ENCODE measurements at regions of chr20 and their contacts with region 1.

Region 1: GRCh38 chr20:2729251-2729713 is 36.7 kb downstream of the EBF4 start:
- DNase-seq: peak in 7 of 9 donors; percentile 50 to 72 (median 66)
- ATAC-seq: peak; percentile 95
- H3K4me3 ChIP-seq: peak overlapping the region; percentile 2
- H3K4me3 Mint-ChIP-seq: peak overlapping the region; percentile 55 to 87 (median 71)
- H3K27ac ChIP-seq: peak overlapping the region; percentile 62
- H3K27ac Mint-ChIP-seq: peak overlapping the region; percentile 71 to 96 (median 90)
- H3K4me1 ChIP-seq: peaks cover 20 to 33% of the 10 kb centered on the region in 2 donors
- H3K4me1 Mint-ChIP-seq: peaks cover 9 to 47% (median 36%) of the 10 kb centered on the region in 7 donors
- H3K27me3 ChIP-seq: no peaks in the 10 kb centered on the region
- H3K27me3 Mint-ChIP-seq: peaks cover 0 to 36% (median 0%) of the 10 kb centered on the region in 5 donors

Region 2: GRCh38 chr20:2663887-2664719 is 65.2 kb before region 1 on chr20 and contains the start of gene IDH3B:
- CTCF ChIA-PET with region 1: no interaction called
- POLR2A ChIA-PET with region 1: interaction called, 10 read pairs
- intact Hi-C with region 1: no loop called
- DNase-seq: peak; percentile 76 to 94 (median 90)
- ATAC-seq: peak; percentile 99
- H3K4me3 ChIP-seq: peak within 1 kb of the TSS; percentile 89
- H3K4me3 Mint-ChIP-seq: peak within 1 kb of the TSS; percentile 87 to 97 (median 94)
- H3K27ac ChIP-seq: peak within 1 kb of the TSS; percentile 87
- H3K27ac Mint-ChIP-seq: peak within 1 kb of the TSS; percentile 94 to 99 (median 97)
- H3K4me1 ChIP-seq: peaks cover 10 to 15% of the 10 kb centered on the region in 2 donors
- H3K4me1 Mint-ChIP-seq: peaks cover 4 to 34% (median 29%) of the 10 kb centered on the region in 7 donors
- H3K27me3 ChIP-seq: no peaks in the 10 kb centered on the region
- H3K27me3 Mint-ChIP-seq: peaks cover 0 to 10% (median 0%) of the 10 kb centered on the region in 5 donors
- total RNA-seq, gene IDH3B: 105 to 161 (median 107) TPM

Region 3: GRCh38 chr20:2693286-2694000 is 35.8 kb before region 1 on chr20:
- CTCF ChIA-PET with region 1: interaction called, 25 read pairs
- POLR2A ChIA-PET with region 1: interaction called, 3 read pairs
- intact Hi-C with region 1: loop called in 1 of 2 experiments (anchors 1 kb)
- DNase-seq: peak; percentile 15 to 70 (median 38)
- ATAC-seq: peak; percentile 73
- H3K4me3 ChIP-seq: no peak overlapping the region
- H3K4me3 Mint-ChIP-seq: peak overlapping the region in 4 of 10 donors; percentile 14 to 72 (median 42)
- H3K27ac ChIP-seq: no peak overlapping the region
- H3K27ac Mint-ChIP-seq: no peak overlapping the region
- H3K4me1 ChIP-seq: peaks cover 2% of the 10 kb centered on the region in 2 donors
- H3K4me1 Mint-ChIP-seq: peaks cover 16 to 26% (median 20%) of the 10 kb centered on the region in 7 donors
- H3K27me3 ChIP-seq: peaks cover 4 to 9% of the 10 kb centered on the region in 2 donors
- H3K27me3 Mint-ChIP-seq: peaks cover 16 to 55% (median 23%) of the 10 kb centered on the region in 5 donors

Region 4: DNA sequence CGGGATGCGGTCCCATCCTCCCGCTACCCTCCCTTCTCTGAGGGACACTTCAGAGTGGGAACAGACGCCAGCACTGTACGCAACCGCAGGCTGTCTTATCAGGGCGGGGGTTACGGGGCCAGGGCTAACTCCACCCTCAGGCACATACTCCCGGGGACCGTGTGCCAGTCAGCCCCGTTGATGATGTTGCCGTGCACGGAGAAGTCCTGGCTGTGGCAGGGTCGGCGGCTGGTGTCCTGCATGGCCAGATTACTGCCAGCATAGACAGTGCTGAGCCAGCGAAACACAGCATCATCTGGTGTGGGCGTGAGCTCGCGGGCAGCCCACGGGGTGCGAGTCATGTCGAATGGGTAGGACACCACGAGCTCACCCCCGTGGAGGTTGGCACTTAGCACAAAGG is 66.2 kb after region 1 on chr20:
- CTCF ChIA-PET with region 1: no interaction called
- POLR2A ChIA-PET with region 1: no interaction called
- intact Hi-C with region 1: no loop called
- DNase-seq: no peak
- ATAC-seq: no peak
- H3K4me3 ChIP-seq: no peak overlapping the region
- H3K4me3 Mint-ChIP-seq: no peak overlapping the region
- H3K27ac ChIP-seq: no peak overlapping the region
- H3K27ac Mint-ChIP-seq: no peak overlapping the region
- H3K4me1 ChIP-seq: no peaks in the 10 kb centered on the region
- H3K4me1 Mint-ChIP-seq: peaks cover 11 to 16% (median 15%) of the 10 kb centered on the region in 7 donors
- H3K27me3 ChIP-seq: peaks cover 0 to 5% of the 10 kb centered on the region in 2 donors
- H3K27me3 Mint-ChIP-seq: peaks cover 45 to 48% (median 48%) of the 10 kb centered on the region in 5 donors